AG04449 (cell line): ENCODE measurements at regions of chr19 and their contacts with region 1.

Region 1: GRCh38 chr19:50922317-50922853 is 11.2 kb upstream of the KLK4 start:
- DNase-seq: no peak
- H3K4me3 ChIP-seq: no peak overlapping the region
- CTCF ChIP-seq: peak; percentile 85

Region 2: DNA sequence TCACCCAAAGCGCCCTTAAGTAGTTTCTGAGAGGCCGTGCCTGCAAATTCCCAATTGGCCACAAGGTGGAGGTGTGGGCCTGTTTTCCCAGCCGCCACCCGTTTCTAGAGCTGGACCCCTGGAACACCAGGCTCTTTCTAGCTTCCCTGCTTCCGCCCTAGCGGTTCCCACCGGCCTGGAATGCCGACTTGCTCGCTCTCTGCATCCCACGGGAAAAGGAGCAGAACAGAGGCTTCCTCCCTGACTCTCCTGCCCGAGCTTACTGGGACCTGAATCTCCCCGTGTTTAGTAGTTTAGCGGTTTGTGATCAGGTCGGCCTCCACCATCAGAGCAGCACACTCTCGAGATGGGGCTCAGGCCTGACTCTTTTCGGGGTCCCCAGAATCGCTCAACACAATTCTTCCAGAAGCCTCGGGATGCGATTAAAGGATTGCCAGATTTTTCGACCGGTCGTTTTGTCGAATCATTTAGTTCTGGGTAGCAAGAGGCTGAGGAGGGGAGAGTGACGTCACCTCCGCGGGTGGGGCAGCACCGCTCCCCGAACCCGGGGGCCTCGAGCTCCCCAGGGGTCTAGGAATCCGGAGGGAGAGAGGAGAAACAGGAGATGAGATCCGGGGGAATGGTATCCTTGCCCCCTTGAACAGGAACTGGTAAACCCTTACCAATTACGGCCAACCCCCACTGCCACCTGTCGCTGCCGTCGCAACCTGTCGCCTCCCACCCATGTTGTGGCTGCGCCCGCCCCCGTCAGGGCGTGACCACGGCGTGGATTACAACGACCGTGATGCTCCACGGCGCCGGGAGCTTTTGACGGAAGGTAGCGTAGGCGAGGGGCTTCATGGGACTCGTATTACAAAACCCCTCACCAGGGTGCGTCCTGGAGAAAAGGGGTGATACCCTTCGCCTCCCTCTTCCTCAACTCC is 564.9 kb before region 1 on chr19:
- CTCF ChIA-PET with region 1: interaction called, 18 read pairs
- POLR2A ChIA-PET with region 1: no interaction called
- DNase-seq: no peak
- H3K4me3 ChIP-seq: peak overlapping the region; percentile 45
- CTCF ChIP-seq: peak; percentile 73

Region 3: DNA sequence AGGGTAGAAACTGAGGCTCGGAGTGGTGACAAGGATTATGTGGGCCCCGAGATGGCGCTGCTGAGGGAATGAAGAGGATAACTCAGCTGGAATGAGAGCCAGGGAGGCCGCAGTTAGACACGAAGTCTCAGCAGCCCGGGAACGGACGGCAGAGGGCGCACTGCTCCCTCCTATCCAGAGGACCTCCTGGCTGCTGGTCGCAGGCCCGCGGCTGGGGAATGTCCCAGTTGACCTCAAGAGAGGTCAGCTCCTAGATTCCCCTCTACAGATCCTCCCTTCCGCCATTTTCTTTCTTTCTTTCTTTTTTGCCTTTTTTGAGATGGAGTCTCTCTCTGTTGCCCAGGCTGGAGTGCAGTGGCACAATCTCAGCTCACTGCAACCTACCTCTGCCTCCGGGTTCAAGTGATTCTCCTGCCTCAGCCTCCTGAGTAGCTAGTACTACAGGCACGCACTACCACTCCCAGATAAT is 384.6 kb before region 1 on chr19:
- CTCF ChIA-PET with region 1: interaction called, 42 read pairs
- POLR2A ChIA-PET with region 1: no interaction called
- DNase-seq: peak; percentile 28
- H3K4me3 ChIP-seq: no peak overlapping the region
- CTCF ChIP-seq: peak; percentile 93

Region 4: GRCh38 chr19:50669302-50670101 is 252.9 kb before region 1 on chr19:
- CTCF ChIA-PET with region 1: interaction called, 16 read pairs
- POLR2A ChIA-PET with region 1: no interaction called
- DNase-seq: no peak
- H3K4me3 ChIP-seq: no peak overlapping the region
- CTCF ChIP-seq: peak; percentile 83

Region 5: DNA sequence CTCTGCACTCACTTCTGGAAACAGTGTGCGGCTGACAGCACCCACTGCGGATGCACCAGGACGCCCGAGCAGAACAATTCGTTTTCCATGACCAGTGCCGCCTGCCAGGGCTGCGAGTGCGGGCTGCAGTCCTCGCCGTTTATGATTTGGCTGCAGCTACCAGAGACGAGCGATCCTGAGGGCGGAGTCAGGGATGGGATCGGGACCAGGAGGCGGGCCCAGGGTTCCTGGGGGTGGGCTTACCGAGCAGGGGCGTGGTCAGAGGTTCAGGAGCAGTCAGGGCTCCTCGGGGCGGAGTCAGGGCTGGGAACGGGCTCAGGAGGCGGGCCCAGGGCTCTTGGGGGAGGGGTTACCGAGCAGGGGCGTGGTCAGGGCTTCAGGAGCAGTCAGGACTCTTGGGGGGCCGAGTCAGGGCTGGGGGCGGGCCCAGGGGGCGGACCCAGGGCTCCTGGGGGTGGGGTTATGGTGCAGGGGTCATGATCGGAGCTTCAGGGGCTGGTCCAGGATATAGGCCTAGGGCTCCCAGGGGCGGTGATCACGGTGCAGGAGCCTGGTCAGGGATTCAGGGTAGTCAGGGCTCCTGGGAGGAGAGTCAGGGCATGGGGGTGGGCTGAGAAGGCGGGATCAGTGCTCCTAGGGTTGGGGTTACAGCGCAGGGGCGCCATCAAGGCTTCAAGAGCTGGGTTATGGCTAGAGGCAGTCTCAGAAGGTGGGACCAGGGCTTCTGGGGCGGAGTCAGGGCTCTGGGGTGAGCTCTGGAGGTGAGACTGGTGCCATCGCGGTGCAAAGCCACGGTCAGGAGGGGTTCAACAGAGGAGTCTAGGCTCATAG is 12.9 kb before region 1 on chr19:
- CTCF ChIA-PET with region 1: interaction called, 14 read pairs
- POLR2A ChIA-PET with region 1: no interaction called
- DNase-seq: no peak
- H3K4me3 ChIP-seq: no peak overlapping the region
- CTCF ChIP-seq: no peak

Region 6: DNA sequence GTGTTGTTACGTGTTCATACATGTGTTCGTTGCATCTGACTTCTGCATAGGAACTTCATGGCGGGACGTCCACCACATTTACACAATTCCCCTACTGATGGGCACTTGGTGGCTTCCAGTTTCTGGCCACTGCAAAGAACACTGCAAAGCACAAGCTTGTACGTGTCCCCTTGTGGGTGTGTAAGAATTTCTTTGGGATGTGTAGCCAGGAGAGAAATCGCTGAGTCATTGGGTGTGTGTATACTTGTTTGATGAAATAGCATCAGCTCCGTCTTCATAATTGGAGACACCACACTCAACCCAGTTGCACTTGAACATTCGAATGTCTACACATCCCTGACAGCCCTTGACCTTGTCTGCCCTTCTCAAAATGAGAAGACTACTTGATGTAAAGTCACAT is 11.3 kb after region 1 on chr19:
- CTCF ChIA-PET with region 1: interaction called, 21 read pairs
- POLR2A ChIA-PET with region 1: no interaction called
- DNase-seq: no peak
- H3K4me3 ChIP-seq: no peak overlapping the region
- CTCF ChIP-seq: no peak